OCI-LY7 (cell line): ENCODE measurements at regions of chr6 and their contacts with region 1.

Region 1: DNA sequence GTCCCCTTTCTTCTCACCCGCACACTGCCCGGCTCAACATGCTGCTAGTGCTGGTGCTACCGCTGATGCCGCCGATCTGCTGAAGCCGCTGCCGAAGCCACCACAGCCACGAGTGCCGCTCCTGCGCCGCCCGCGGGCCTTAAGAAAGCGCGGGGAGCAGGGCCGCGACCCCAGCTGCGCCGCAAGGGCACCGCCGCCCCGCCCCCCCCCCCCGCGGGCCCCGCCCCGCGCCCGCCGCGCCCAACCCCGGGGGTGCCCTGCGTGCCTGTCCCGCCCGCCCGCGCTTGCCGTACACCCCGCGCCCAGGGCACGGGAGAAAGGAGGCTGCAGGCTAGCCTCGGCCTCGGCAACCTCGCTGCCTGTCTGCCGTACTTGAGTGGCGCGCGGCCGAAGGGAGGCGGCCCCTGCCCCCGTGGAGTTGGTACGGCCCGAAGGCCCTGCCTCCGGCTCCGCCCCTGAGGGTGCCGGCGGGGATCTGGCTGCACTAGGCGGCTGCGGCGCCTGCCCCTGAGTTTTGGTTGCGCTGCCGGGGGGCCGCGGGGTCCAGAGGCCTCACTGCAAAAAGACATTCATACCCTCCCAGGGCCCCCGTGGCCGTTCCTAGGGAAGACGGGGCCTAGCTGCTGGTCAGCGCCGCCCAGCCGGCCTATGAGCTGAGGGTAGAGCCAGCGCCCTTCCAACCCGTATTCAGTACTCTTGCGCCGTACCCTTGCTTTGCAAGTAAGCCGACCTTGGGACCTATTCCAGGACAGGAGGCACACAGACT is at the start of gene SOD2:
- DNase-seq: peak; percentile 92
- H3K4me3 ChIP-seq: peak within 1 kb of the TSS; percentile 78
- H3K27ac ChIP-seq: peak within 1 kb of the TSS; percentile 46
- H3K4me1 ChIP-seq: peaks cover 21% of the 10 kb centered on the region
- CTCF ChIP-seq: no peak
- total RNA-seq, gene SOD2: 29.7 and 36.4 TPM in 2 replicates

Region 2: DNA sequence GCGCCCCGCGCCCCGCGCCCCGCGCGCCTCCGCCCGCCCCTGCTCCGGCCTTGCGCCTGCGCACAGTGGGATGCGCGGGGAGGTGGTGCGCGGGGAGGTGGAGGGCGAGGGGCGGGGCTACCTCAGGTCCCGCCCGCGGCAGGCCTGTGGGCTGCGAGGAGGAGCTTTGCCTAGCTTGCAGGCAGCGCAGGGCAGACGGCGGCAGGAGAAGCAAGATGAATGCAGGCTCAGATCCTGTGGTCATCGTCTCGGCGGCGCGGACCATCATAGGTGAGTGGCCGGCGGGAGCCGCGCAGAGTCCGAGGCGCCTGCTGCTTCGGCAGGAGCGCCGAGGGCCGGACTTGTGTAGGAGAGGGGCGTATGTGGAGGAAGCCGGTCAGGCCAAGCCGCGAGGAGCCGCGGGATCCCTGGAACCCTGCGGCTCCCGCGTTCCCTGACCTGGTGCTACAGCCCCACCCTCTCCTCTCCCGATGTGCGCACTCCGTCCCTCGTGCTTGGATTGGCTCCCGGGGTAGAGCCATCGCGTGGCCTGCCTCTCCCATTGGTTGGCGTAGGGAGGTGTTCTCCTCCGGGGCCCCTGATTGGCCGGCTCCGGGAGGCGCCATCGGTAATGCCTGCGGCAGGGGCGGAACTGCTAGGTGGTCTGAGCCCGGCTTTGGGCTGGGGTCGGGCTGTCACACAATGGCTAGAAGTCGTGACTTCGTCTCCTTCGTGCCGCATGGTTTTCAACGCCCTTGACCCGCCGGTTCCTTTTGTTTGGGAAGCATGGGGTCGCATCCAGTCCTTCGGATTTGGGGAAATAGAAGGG is 68.8 kb after region 1 on chr6 and contains the start of gene ACAT2:
- CTCF ChIA-PET with region 1: no interaction called
- POLR2A ChIA-PET with region 1: no interaction called
- intact Hi-C with region 1: loop called (anchors 2 kb)
- DNase-seq: peak; percentile 97
- H3K4me3 ChIP-seq: peak within 1 kb of the TSS; percentile 71
- H3K27ac ChIP-seq: peak within 1 kb of the TSS; percentile 81
- H3K4me1 ChIP-seq: peaks cover 15% of the 10 kb centered on the region
- CTCF ChIP-seq: no peak
- total RNA-seq, gene ACAT2: 39.4 and 42.4 TPM in 2 replicates

Region 3: GRCh38 chr6:159836718-159837490 is 143.6 kb after region 1 on chr6:
- CTCF ChIA-PET with region 1: no interaction called
- POLR2A ChIA-PET with region 1: no interaction called
- intact Hi-C with region 1: no loop called
- DNase-seq: no peak
- H3K4me3 ChIP-seq: no peak overlapping the region
- H3K27ac ChIP-seq: no peak overlapping the region
- H3K4me1 ChIP-seq: peaks cover 30% of the 10 kb centered on the region
- CTCF ChIP-seq: no peak

Region 4: DNA sequence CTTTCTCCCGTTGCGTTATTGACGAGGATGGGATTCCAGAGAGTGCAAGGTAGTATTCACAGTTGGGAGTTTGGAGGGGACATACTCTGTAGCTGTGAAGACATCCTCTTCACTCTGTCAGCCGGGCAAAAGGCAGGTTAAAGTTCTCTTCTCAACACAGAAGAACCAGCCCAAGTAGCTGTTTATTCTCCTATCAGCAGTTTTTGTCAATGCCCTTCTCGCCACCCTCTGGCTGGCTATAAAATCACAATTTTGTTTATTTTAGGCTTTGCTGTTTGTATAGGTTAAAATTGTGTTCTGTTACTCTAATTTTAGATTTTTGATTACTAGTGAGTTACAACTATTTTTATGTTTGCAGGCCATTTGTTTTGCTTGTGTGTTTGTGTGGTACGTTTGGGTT is 159.6 kb after region 1 on chr6:
- CTCF ChIA-PET with region 1: no interaction called
- POLR2A ChIA-PET with region 1: no interaction called
- intact Hi-C with region 1: loop called (anchors 1 kb)
- DNase-seq: peak; percentile 58
- H3K4me3 ChIP-seq: no peak overlapping the region
- H3K27ac ChIP-seq: no peak overlapping the region
- H3K4me1 ChIP-seq: no peaks in the 10 kb centered on the region
- CTCF ChIP-seq: peak; percentile 81

Region 5: DNA sequence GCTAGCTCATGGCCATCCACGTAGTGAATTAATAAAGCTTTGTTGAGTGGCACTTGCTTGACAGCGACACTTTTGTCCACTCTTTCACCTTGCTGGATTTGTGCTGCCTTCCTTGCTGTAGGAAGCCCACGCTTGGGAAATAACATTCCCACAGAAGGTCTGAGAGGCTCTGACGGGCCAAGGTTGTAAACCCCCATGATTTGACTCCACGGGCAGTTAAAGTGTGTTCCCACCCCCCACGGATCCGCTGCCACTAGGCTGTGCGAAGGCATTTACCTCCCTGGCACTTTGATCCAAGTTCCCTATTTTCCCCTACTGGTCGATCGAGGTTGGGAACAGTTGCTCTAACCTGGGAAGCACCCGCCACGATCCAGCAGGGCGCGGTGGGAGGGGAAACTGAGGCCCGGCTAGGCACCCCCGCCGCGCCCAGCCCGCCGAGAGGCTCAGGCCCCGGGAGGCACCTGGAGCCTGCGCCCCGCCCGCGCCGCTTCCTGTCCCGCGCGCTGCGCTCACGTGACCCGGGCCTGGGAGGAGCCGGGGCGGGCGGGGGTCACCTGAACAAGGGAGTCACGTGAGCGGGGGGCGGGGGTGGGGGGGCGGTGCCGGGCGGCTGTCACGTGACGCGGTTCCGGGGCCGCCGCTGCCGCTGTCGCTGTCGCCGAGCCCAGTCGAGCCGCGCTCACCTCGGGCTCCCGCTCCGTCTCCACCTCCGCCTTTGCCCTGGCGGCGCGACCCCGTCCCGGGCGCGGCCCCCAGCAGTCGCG is 275.3 kb after region 1 on chr6 and contains the start of gene IGF2R:
- CTCF ChIA-PET with region 1: no interaction called
- POLR2A ChIA-PET with region 1: interaction called, 3 read pairs
- intact Hi-C with region 1: loop called (anchors 5 kb)
- DNase-seq: peak; percentile 96
- H3K4me3 ChIP-seq: peak within 1 kb of the TSS; percentile 92
- H3K27ac ChIP-seq: peak within 1 kb of the TSS; percentile 19
- H3K4me1 ChIP-seq: peaks cover 17% of the 10 kb centered on the region
- CTCF ChIP-seq: no peak
- total RNA-seq, gene IGF2R: 17.9 and 19.3 TPM in 2 replicates

Region 6: DNA sequence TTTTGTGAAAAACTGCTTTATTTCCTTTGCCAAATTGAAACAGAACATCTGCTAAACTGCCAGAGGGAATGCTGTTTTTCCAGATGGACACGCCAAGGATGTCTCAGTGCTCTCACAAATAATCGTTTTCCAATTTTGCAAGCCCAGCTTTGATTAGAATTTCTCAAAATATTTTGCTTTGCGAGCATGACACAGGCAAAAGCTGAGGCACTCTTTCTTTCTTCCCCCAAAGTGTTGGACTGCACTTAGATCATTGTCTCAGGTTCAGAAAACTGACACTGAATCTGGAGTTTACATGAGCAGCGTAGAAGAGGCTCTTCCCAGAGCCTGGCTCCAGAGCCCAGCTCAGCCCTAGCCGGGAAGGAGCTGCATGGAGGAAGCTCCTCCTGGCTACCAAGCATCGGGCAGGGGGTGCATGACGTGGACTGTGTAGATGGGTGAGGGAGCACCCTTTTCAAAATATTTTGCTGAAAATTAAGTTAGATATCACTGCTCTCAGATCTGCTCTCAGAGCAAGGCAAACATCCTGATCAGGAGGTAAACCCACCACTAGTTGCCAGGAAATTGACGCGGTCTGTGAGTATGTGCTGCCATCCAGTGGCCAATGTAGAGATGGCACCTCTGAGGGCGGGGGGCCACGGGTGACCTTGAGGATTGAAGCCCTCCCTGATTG is 762.4 kb after region 1 on chr6:
- CTCF ChIA-PET with region 1: no interaction called
- POLR2A ChIA-PET with region 1: no interaction called
- intact Hi-C with region 1: loop called (anchors 10 kb)
- DNase-seq: peak; percentile 56
- H3K4me3 ChIP-seq: no peak overlapping the region
- H3K27ac ChIP-seq: no peak overlapping the region
- H3K4me1 ChIP-seq: no peaks in the 10 kb centered on the region
- CTCF ChIP-seq: peak; percentile 95